ENCODE measurements at regions of chr21 and their contacts with region 1.

Region 1: DNA sequence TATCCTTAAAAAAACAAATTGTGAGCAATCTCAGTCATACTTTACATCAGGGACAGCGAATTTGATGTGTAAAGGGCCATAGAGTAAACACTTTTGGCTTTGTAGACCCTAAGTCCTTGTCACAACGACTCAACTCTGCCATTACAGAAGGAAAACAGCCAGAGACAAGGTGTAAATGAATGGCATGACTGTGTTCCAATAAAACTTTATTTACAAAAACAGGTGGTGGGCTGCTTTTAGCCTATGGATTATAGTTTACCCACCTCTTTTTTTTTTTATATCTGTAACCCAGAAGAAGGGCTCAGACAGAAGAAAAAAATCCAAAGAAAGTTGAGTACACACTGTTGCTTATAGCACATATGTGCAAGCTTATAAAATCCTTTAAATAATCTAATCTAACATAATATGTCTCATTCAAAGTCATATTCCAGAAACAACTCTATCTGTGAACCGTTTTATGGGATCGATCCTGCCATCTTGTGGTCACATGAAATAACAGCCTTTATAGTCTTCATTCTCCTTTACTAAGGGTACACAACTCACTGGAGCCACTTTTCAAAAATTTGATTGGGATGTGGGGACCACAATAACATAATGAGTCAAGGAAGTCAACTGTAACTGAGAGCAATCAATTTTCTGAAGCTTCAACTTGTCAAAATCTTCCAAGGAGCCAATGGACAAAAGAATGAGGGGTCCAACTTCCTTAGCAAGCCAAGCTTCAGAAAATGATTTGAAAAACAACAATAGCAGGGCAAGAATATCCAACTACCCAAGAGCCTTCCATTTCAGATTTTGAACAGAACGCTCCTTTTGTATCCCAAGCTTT is 142.2 kb upstream of the KRTAP19-8 start:
- DNase-seq: no peak
- H3K4me3 ChIP-seq: no peak overlapping the region
- H3K27ac ChIP-seq: no peak overlapping the region
- H3K4me1 ChIP-seq: no peaks in the 10 kb centered on the region
- H3K27me3 ChIP-seq: no peaks in the 10 kb centered on the region
- CTCF ChIP-seq: peak in 2 of 3 donors; percentile 26 to 31
- POLR2A ChIP-seq: no peak

Region 2: DNA sequence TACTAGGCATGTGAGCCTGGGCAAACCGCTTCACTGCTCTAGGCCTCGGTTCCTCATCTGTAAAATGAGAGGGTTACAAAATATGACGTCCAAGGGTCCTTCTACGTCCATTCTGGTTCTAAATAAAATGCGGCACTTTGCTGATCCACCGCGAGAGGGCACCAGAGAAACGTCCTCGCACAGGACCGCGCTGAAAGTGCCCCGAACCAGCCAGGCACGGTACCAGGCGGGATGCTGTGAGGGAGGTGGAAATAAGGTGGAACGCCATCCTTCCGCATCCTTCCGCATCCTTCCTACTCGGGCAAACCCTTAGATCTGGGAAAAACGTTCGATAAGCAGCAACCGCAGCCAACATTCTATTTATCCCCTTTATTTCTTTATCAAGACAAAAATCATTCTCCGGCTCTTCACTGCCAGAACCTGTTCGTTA is 81.9 kb before region 1 on chr21:
- intact Hi-C with region 1: loop called (anchors 10 kb)
- DNase-seq: peak; percentile 32 to 65
- H3K4me3 ChIP-seq: no peak overlapping the region
- H3K27ac ChIP-seq: no peak overlapping the region
- H3K4me1 ChIP-seq: no peaks in the 10 kb centered on the region
- H3K27me3 ChIP-seq: no peaks in the 10 kb centered on the region
- CTCF ChIP-seq: peak in 2 of 3 donors; percentile 59 to 65
- POLR2A ChIP-seq: no peak

Region 3: GRCh38 chr21:31191553-31191952 is 11.1 kb after region 1 on chr21:
- intact Hi-C with region 1: loop called (anchors 1 kb)
- DNase-seq: no peak
- H3K4me3 ChIP-seq: no peak overlapping the region
- H3K27ac ChIP-seq: no peak overlapping the region
- H3K4me1 ChIP-seq: no peaks in the 10 kb centered on the region
- H3K27me3 ChIP-seq: no peaks in the 10 kb centered on the region
- CTCF ChIP-seq: no peak
- POLR2A ChIP-seq: no peak